ENCODE measurements at regions of chr4 and their contacts with region 1.

Region 1: GRCh38 chr4:83455281-83456129 is at the starts of genes HELQ and MRPS18C:
- DNase-seq: peak; percentile 97
- H3K4me3 Mint-ChIP-seq: peak within 1 kb of the TSS; percentile 99
- H3K27ac Mint-ChIP-seq: peak within 1 kb of the TSS; percentile 100
- H3K4me1 Mint-ChIP-seq: peaks cover 49% of the 10 kb centered on the region
- H3K27me3 Mint-ChIP-seq: no peaks in the 10 kb centered on the region
- total RNA-seq, gene HELQ: 16.4 to 17.8 TPM
- total RNA-seq, gene MRPS18C: 58.1 to 58.5 TPM

Region 2: DNA sequence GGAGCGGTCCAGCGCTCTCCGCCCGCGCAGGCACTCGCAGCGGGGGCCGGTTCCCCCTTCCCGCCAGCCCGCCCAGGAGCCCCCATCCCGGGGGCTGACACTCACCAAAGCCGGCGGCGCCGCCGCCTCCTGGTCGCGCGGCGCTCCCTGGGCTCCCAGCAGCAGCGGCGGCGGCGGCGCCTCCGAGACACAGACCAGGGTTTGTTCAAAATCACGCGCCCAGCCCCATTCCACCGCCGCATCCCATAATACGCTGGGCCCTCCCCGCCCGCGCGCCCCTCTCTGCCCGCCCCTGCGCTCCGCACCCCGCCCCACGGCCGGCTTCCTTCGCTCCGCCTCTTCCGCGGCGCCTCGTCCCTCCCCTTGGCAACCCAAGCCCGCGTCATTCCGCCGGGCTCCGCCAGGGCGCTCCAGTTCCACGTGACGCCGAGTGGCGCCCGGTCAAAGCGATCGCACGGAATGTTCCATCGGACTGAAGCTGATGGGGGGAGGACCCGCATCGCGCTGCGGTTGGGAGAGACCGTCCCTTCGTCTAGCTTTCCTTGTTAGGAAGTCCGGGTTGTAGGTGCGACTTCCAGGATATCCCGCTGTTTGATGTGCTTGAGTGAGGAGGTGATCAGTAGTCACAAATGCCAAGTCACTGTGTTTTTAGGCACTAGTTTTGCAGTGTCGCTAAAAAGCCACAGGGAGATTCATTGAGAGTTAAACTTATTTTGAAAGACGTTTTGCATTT is 442.7 kb before region 1 on chr4:
- CTCF ChIA-PET with region 1: no interaction called
- POLR2A ChIA-PET with region 1: interaction called, 21 read pairs
- DNase-seq: peak; percentile 98
- H3K4me3 Mint-ChIP-seq: peak overlapping the region; percentile 88
- H3K27ac Mint-ChIP-seq: peak overlapping the region; percentile 78
- H3K4me1 Mint-ChIP-seq: peaks cover 38% of the 10 kb centered on the region
- H3K27me3 Mint-ChIP-seq: no peaks in the 10 kb centered on the region

Region 3: GRCh38 chr4:83484500-83485461 is 29.3 kb after region 1 on chr4 and contains the start of gene ABRAXAS1:
- CTCF ChIA-PET with region 1: no interaction called
- POLR2A ChIA-PET with region 1: interaction called, 23 read pairs
- DNase-seq: peak; percentile 95
- H3K4me3 Mint-ChIP-seq: peak within 1 kb of the TSS; percentile 95
- H3K27ac Mint-ChIP-seq: peak within 1 kb of the TSS; percentile 89
- H3K4me1 Mint-ChIP-seq: peaks cover 15% of the 10 kb centered on the region
- H3K27me3 Mint-ChIP-seq: no peaks in the 10 kb centered on the region
- total RNA-seq, gene ABRAXAS1: 11.2 to 13.7 TPM